ENCODE measurements at regions of chr5 and their contacts with region 1.

Region 1: DNA sequence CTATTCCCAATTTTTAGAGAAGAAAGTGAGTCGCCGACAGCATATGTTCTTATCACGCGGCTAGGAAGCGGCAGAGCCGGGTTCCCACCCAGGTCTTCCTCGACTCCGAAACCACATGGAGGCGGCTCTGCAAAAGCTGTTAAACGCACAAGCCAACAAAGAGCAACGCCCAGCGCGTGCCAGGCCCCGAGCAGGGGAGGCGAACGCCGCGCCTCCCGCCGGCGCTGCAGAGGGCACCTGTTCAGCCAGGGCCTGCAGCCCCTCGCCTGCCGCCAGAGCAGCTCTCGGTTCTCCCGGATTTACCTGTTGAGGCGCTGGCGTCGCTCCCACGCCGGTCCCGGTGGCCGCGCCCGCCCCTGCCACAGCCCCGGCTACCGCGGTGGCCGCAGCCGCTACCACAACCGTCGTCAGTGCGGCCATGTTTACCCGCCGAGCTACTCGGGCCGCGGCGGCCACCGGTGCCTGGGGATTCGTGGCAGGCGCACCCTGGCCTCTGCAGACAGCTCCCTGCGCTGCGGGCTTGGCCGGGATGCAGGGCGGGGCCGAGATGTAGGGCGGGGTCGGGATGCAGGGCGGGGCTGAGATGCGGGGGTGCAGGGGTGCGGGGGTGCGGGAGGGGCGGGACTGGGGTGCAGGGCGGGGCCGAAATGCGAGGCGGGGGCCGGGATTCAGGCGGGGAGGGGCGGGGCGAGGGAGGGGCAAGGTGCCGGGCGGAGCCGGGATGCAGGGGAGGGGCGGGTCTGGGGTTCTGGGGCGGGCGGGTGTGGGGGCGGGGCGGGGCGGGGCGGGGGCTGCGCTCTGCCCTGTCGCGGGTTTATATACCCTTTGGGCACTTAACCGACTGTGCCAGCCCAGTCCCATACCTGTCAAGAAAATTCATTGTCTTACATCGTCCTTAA is at the start of gene CCDC112:
- DNase-seq: peak; percentile 81
- ATAC-seq: peak; percentile 85
- H3K4me3 Mint-ChIP-seq: peak within 1 kb of the TSS; percentile 73
- H3K27ac Mint-ChIP-seq: no peak within 1 kb of the TSS
- H3K4me1 Mint-ChIP-seq: peaks cover 4% of the 10 kb centered on the region
- H3K27me3 Mint-ChIP-seq: peaks cover 10% of the 10 kb centered on the region
- CTCF ChIP-seq: no peak
- total RNA-seq, gene CCDC112: 1.5 to 2.4 TPM

Region 2: DNA sequence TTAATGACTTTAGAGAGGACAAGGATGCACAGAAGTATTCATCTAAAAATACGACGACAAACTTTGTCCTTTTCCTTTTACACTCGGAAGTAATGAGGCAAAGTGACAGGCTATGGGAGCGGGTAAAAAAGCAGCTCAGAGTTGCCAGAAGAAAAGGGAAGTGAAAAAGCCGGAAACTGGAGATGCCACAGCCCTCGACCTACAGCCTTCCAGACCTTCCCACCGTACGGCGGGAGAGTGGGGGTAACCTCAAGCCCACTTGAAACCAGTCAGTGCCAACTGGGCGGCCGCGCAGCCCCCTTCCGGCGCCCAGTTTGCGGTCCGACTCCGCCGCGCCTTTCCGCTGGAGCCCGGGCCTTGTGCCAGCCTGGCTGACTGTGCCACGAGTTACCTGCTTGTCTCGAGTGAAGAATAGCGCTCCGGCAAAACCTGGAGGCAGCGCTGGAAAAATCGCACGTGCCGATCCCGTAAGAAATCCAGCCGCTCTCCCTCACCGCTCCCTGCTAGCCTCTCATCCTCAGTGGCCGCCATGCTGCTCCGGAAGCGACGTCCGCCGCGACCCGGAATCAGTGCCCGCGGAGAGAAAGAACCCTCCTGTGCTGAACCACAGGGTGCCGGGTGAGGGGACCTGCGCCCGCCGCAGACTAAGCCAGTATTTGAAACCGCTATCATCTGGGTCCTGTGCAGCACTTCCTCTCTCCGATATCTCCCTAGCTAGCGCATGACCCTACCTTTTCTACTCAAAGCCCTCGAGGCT is 33.9 kb before region 1 on chr5 and contains the start of gene PGGT1B:
- CTCF ChIA-PET with region 1: interaction called, 6 read pairs
- POLR2A ChIA-PET with region 1: interaction called, 14 read pairs
- intact Hi-C with region 1: no loop called
- DNase-seq: peak; percentile 81
- ATAC-seq: peak; percentile 96
- H3K4me3 Mint-ChIP-seq: peak within 1 kb of the TSS; percentile 92
- H3K27ac Mint-ChIP-seq: peak within 1 kb of the TSS; percentile 90
- H3K4me1 Mint-ChIP-seq: peaks cover 36% of the 10 kb centered on the region
- H3K27me3 Mint-ChIP-seq: no peaks in the 10 kb centered on the region
- CTCF ChIP-seq: no peak
- total RNA-seq, gene PGGT1B: 37.7 to 38.3 TPM